ENCODE measurements at regions of chr1 and their contacts with region 1.

Region 1: GRCh38 chr1:19750101-19750881 is 49.4 kb downstream of the TMCO4 start:
- DNase-seq: peak; percentile 91
- ATAC-seq: peak; percentile 83
- H3K4me3 ChIP-seq: no peak overlapping the region
- H3K27ac ChIP-seq: peak overlapping the region; percentile 85
- H3K4me1 ChIP-seq: peaks cover 34% of the 10 kb centered on the region
- H3K27me3 ChIP-seq: no peaks in the 10 kb centered on the region
- CTCF ChIP-seq: no peak

Region 2: GRCh38 chr1:19715334-19716203 is 34.7 kb before region 1 on chr1:
- CTCF ChIA-PET with region 1: no interaction called
- POLR2A ChIA-PET with region 1: no interaction called
- intact Hi-C with region 1: loop called (anchors 5 kb)
- DNase-seq: peak; percentile 97
- ATAC-seq: peak; percentile 99
- H3K4me3 ChIP-seq: no peak overlapping the region
- H3K27ac ChIP-seq: no peak overlapping the region
- H3K4me1 ChIP-seq: no peaks in the 10 kb centered on the region
- H3K27me3 ChIP-seq: no peaks in the 10 kb centered on the region
- CTCF ChIP-seq: peak; percentile 90

Region 3: GRCh38 chr1:19735440-19736127 is 14.7 kb before region 1 on chr1:
- CTCF ChIA-PET with region 1: no interaction called
- POLR2A ChIA-PET with region 1: no interaction called
- intact Hi-C with region 1: loop called (anchors 2 kb)
- DNase-seq: peak; percentile 83
- ATAC-seq: peak; percentile 81
- H3K4me3 ChIP-seq: no peak overlapping the region
- H3K27ac ChIP-seq: peak overlapping the region; percentile 88
- H3K4me1 ChIP-seq: peaks cover 38% of the 10 kb centered on the region
- H3K27me3 ChIP-seq: no peaks in the 10 kb centered on the region
- CTCF ChIP-seq: no peak